Caco-2 (cell line): ENCODE measurements at regions of chr6 and their contacts with region 1.

Region 1: GRCh38 chr6:69835414-69836179 is 30.8 kb upstream of the COL19A1 start:
- DNase-seq: peak in 1 of 2 experiments; percentile 42
- H3K4me3 ChIP-seq: no peak overlapping the region
- H3K4me3 Mint-ChIP-seq: no peak overlapping the region
- H3K27ac Mint-ChIP-seq: no peak overlapping the region
- H3K4me1 ChIP-seq: no peaks in the 10 kb centered on the region
- H3K4me1 Mint-ChIP-seq: no peaks in the 10 kb centered on the region
- H3K27me3 ChIP-seq: no peaks in the 10 kb centered on the region
- H3K27me3 Mint-ChIP-seq: peaks cover 5% of the 10 kb centered on the region
- CTCF ChIP-seq: peak; percentile 56 to 79

Region 2: DNA sequence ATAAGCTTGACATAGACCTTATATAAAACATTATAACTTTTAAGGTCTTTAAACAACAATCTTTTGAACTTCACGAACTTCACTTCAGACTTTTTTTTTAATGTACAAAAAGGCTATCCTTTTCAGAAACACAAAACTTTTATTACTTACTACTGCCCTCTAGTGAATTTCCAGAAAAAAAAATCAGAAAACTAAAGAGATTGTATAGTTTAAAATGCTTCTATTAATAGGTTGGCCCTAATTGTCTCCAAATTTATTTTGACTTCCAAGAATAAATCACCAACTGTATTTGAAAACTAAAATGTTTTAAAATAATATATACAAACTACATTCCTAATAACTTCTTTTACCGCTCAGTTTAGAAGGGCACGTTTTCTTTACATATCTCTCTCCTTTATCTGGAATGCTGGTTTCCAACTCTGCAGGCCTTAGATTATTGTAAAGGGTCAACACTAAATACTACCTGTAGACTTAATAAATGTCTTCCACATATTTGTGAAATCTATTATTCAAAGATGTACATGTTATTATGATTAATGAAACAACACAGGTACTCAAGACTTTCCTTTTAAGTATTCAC is 105.6 kb before region 1 on chr6:
- CTCF ChIA-PET with region 1: no interaction called
- POLR2A ChIA-PET with region 1: no interaction called
- intact Hi-C with region 1: no loop called
- DNase-seq: no peak
- H3K4me3 ChIP-seq: no peak overlapping the region
- H3K4me3 Mint-ChIP-seq: no peak overlapping the region
- H3K27ac Mint-ChIP-seq: no peak overlapping the region
- H3K4me1 ChIP-seq: no peaks in the 10 kb centered on the region
- H3K4me1 Mint-ChIP-seq: no peaks in the 10 kb centered on the region
- H3K27me3 ChIP-seq: no peaks in the 10 kb centered on the region
- H3K27me3 Mint-ChIP-seq: no peaks in the 10 kb centered on the region
- CTCF ChIP-seq: peak; percentile 29 to 39

Region 3: GRCh38 chr6:69866770-69867638 is 31.4 kb after region 1 on chr6:
- CTCF ChIA-PET with region 1: no interaction called
- POLR2A ChIA-PET with region 1: no interaction called
- intact Hi-C with region 1: loop called (anchors 1 kb)
- DNase-seq: peak; percentile 47 to 78
- H3K4me3 ChIP-seq: peak overlapping the region; percentile 53
- H3K4me3 Mint-ChIP-seq: peak overlapping the region; percentile 81
- H3K27ac Mint-ChIP-seq: no peak overlapping the region
- H3K4me1 ChIP-seq: peaks cover 5% of the 10 kb centered on the region
- H3K4me1 Mint-ChIP-seq: peaks cover 4% of the 10 kb centered on the region
- H3K27me3 ChIP-seq: no peaks in the 10 kb centered on the region
- H3K27me3 Mint-ChIP-seq: peaks cover 7% of the 10 kb centered on the region
- CTCF ChIP-seq: peak in 1 of 2 experiments; percentile 15

Region 4: DNA sequence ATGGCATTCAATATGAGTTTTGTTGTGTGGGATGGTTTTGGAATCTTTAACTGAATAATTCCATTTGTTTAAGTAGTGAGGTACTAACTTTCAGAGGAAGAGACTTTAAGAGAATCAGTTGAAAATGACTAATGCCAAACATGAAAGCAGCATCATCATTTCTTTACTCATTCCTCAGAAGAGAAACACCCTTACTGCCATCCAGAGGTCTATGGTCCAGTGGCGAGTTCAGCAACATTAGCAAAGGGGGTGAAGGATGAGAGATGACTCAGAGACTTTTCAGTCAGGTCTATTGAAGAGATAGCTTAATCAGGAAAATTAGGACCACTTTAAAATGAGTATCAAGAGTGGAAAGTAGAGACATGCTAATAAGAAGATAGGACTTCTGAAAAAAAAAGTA is 149.6 kb after region 1 on chr6:
- CTCF ChIA-PET with region 1: no interaction called
- POLR2A ChIA-PET with region 1: no interaction called
- intact Hi-C with region 1: loop called (anchors 1 kb)
- DNase-seq: no peak
- H3K4me3 ChIP-seq: no peak overlapping the region
- H3K4me3 Mint-ChIP-seq: no peak overlapping the region
- H3K27ac Mint-ChIP-seq: no peak overlapping the region
- H3K4me1 ChIP-seq: no peaks in the 10 kb centered on the region
- H3K4me1 Mint-ChIP-seq: no peaks in the 10 kb centered on the region
- H3K27me3 ChIP-seq: no peaks in the 10 kb centered on the region
- H3K27me3 Mint-ChIP-seq: peaks cover 14% of the 10 kb centered on the region
- CTCF ChIP-seq: no peak

Region 5: GRCh38 chr6:70094156-70094555 is 258.6 kb after region 1 on chr6:
- CTCF ChIA-PET with region 1: no interaction called
- POLR2A ChIA-PET with region 1: no interaction called
- intact Hi-C with region 1: loop called (anchors 5 kb)
- DNase-seq: no peak
- H3K4me3 ChIP-seq: no peak overlapping the region
- H3K4me3 Mint-ChIP-seq: no peak overlapping the region
- H3K27ac Mint-ChIP-seq: no peak overlapping the region
- H3K4me1 ChIP-seq: no peaks in the 10 kb centered on the region
- H3K4me1 Mint-ChIP-seq: no peaks in the 10 kb centered on the region
- H3K27me3 ChIP-seq: no peaks in the 10 kb centered on the region
- H3K27me3 Mint-ChIP-seq: peaks cover 9% of the 10 kb centered on the region
- CTCF ChIP-seq: no peak

Region 6: GRCh38 chr6:70166088-70166958 is 330.7 kb after region 1 on chr6:
- CTCF ChIA-PET with region 1: no interaction called
- POLR2A ChIA-PET with region 1: no interaction called
- intact Hi-C with region 1: loop called (anchors 5 kb)
- DNase-seq: peak; percentile 43 to 55
- H3K4me3 ChIP-seq: no peak overlapping the region
- H3K4me3 Mint-ChIP-seq: peak overlapping the region; percentile 61
- H3K27ac Mint-ChIP-seq: no peak overlapping the region
- H3K4me1 ChIP-seq: no peaks in the 10 kb centered on the region
- H3K4me1 Mint-ChIP-seq: no peaks in the 10 kb centered on the region
- H3K27me3 ChIP-seq: no peaks in the 10 kb centered on the region; the same call in 1 of the 2 replicates
- H3K27me3 Mint-ChIP-seq: no peaks in the 10 kb centered on the region
- CTCF ChIP-seq: peak; percentile 40 to 71